ENCODE measurements at regions of chr7 and their contacts with region 1.

Region 1: DNA sequence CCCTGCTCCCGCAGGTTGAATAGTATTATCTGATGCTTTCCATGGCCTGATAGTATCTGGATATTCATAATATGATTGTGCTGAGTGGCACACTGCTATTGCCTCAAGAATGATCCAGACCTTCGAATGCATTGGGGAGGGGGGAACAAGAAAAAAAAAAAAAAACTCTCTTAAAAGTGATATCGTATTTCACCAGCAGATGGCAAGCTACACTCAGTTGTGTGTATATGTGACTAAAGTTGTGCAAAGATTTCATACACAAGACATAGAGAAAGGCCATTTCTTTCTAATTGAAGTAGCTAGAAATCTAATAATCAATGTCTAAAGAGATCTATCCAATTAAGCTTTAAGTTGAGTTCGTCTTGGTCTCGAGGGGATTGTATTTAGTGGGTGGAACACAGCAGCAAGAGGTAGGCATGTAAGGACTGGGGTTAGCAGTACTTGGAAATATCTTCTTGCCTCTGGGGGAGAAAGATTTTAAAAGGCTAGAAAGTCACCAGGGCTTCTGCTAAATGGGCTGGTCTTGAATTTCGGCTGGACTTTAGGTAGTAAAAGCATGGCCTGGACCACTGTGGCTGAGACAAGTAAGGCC is 15.3 kb downstream of the SFRP4 start:
- DNase-seq: no peak

Region 2: DNA sequence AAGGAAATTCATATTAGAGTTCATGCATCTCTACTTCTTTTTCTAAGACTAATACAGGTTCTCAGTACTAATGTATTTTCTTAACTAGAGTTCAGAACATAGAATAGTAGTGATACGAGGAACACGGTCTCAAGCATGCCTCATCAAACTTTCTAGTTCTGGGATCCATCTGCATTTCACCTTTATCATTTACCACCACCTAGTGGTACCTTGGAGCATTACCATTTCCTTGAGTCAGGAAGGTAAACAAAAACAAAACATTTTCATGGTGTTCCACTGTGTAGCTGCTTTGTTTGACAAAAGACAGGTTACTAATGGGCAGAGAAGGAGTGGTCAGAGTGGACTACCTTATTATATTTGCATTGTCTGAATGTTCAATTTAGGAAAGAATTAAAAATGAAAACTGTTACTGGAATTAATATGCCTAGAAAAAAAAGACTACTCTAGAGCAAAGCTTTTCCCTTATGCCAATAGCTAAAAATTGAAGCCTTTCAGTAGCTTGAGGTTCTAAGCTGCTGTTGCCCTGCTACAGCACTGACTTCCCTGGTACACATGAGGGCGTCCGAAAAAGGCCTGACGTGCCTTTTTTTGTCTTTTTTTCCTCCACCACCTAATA is 321.3 kb after region 1 on chr7:
- intact Hi-C with region 1: loop called (anchors 5 kb)
- DNase-seq: no peak

Region 3: GRCh38 chr7:38369816-38370493 is 468.6 kb after region 1 on chr7:
- intact Hi-C with region 1: loop called (anchors 10 kb)
- DNase-seq: peak; percentile 75 to 98 (median 90)